Activated naive CD4-positive, alpha-beta T cell treated with anti-CD3 and anti-CD28 coated beads for 36 hours (primary cell): ENCODE measurements at regions of chr3 and their contacts with region 1.

Region 1: GRCh38 chr3:172562871-172563863 is 39.9 kb upstream of the TNFSF10 start:
- DNase-seq: peak; percentile 71
- H3K4me3 Mint-ChIP-seq: peak overlapping the region; percentile 11
- H3K27ac Mint-ChIP-seq: peak overlapping the region; percentile 82
- H3K4me1 Mint-ChIP-seq: peaks cover 37% of the 10 kb centered on the region
- H3K27me3 Mint-ChIP-seq: no peaks in the 10 kb centered on the region

Region 2: GRCh38 chr3:172511783-172512762 is 51.1 kb before region 1 on chr3:
- CTCF ChIA-PET with region 1: interaction called, 5 read pairs
- intact Hi-C with region 1: loop called (anchors 1 kb)
- DNase-seq: peak; percentile 92
- H3K4me3 Mint-ChIP-seq: peak overlapping the region; percentile 68
- H3K27ac Mint-ChIP-seq: peak overlapping the region; percentile 93
- H3K4me1 Mint-ChIP-seq: peaks cover 82% of the 10 kb centered on the region
- H3K27me3 Mint-ChIP-seq: no peaks in the 10 kb centered on the region

Region 3: DNA sequence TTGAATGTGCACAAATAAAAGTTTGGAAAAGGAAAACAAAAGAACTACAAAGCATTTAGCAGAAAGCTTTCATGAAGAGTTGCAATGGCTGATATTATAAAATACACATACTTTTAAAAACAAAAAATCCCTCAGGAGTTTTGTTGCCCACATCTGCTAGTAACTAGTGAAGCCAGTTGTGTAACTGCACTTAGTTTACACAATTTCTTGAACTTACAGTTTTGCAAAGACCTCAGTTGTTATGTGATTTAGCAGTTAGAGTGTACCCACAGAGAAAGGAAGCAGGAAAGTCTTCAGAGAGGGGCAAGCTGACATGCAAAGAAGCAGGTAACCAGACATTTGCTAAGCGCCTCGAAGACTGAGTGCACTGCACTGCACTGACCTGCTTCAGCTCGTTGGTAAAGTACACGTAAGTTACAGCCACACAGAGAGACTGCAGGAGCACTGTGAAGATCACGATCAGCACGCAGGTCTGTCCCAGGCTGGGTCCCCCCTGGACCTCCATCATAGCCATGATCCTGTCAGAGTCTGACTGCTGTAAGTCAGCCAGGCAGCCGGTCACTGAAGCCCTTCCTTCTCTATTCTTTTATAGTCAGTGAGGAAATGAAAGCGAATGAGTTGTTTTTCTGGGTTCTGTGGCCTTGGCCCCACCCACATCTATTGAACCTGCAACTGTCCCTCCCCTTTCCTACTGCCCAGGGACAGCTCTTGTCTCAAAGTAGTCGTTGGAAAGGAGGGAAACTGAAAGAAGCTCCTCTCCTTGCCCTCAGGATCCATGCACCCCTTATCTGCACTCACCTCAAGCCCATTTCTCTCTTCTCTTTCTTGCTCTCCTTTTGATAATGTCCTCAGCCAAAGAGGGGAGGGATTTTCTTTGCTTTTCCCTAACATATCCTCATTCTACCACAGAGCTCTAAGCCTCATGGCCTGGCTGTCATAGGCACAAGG is 40.0 kb before region 1 on chr3 and contains the start of gene TNFSF10:
- CTCF ChIA-PET with region 1: interaction called, 8 read pairs
- intact Hi-C with region 1: loop called (anchors 1 kb)
- DNase-seq: peak; percentile 78
- H3K4me3 Mint-ChIP-seq: peak within 1 kb of the TSS; percentile 96
- H3K27ac Mint-ChIP-seq: peak within 1 kb of the TSS; percentile 96
- H3K4me1 Mint-ChIP-seq: peaks cover 42% of the 10 kb centered on the region
- H3K27me3 Mint-ChIP-seq: no peaks in the 10 kb centered on the region
- total RNA-seq, gene TNFSF10: 31.8 to 32.7 TPM

Region 4: GRCh38 chr3:172530566-172530965 is 32.6 kb before region 1 on chr3:
- CTCF ChIA-PET with region 1: interaction called, 17 read pairs
- intact Hi-C with region 1: loop called (anchors 1 kb)
- DNase-seq: peak; percentile 59
- H3K4me3 Mint-ChIP-seq: peak overlapping the region; percentile 22
- H3K27ac Mint-ChIP-seq: peak overlapping the region; percentile 75
- H3K4me1 Mint-ChIP-seq: peaks cover 22% of the 10 kb centered on the region
- H3K27me3 Mint-ChIP-seq: no peaks in the 10 kb centered on the region

Region 5: GRCh38 chr3:172536993-172537419 is 26.2 kb before region 1 on chr3:
- CTCF ChIA-PET with region 1: interaction called, 4 read pairs
- intact Hi-C with region 1: loop called (anchors 1 kb)
- DNase-seq: peak; percentile 49
- H3K4me3 Mint-ChIP-seq: peak overlapping the region; percentile 8
- H3K27ac Mint-ChIP-seq: peak overlapping the region; percentile 91
- H3K4me1 Mint-ChIP-seq: peaks cover 40% of the 10 kb centered on the region
- H3K27me3 Mint-ChIP-seq: no peaks in the 10 kb centered on the region

Region 6: DNA sequence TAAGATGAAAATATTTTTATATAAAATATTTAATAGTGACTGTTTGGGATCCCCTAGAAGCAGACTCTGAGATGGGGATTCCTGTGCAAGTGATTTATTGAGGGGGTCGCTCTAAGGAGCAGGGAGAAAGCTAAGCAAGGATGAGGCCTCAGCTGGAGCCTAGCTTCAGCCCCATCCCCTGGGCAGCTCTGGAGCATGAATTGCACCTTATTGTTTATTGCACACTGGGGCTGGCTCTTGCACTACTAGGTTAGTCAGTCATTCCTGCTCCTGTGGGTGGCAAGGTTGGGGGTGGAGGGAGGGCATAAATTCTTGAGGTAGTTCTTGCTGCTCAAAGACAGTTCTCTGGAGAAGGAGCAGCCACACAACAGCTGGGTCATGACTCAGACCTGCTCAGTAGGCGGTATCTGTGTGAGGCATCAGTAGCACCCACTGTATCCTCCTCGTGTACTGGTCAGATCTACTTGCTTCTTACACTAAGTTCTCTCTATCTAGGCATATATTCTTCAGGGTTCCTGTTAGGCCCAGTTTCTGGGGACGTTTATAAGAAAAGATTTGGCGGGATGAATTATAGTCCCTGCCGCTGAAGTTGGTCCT is 12.7 kb before region 1 on chr3:
- CTCF ChIA-PET with region 1: interaction called, 5 read pairs
- intact Hi-C with region 1: loop called (anchors 1 kb)
- DNase-seq: peak; percentile 91
- H3K4me3 Mint-ChIP-seq: no peak overlapping the region
- H3K27ac Mint-ChIP-seq: peak overlapping the region; percentile 42
- H3K4me1 Mint-ChIP-seq: peaks cover 46% of the 10 kb centered on the region
- H3K27me3 Mint-ChIP-seq: no peaks in the 10 kb centered on the region

Region 7: GRCh38 chr3:172607305-172608121 is 44.3 kb after region 1 on chr3:
- CTCF ChIA-PET with region 1: no interaction called
- intact Hi-C with region 1: loop called (anchors 1 kb)
- DNase-seq: peak; percentile 51
- H3K4me3 Mint-ChIP-seq: no peak overlapping the region
- H3K27ac Mint-ChIP-seq: peak overlapping the region; percentile 61
- H3K4me1 Mint-ChIP-seq: peaks cover 11% of the 10 kb centered on the region
- H3K27me3 Mint-ChIP-seq: no peaks in the 10 kb centered on the region